ENCODE measurements at regions of chrX and their contacts with region 1.

Region 1: GRCh38 chrX:106611679-106612392 is at the start of gene RADX:
- DNase-seq: peak; percentile 10 to 88 (median 78)
- H3K4me3 ChIP-seq: peak within 1 kb of the TSS; percentile 29 to 75 (median 59)
- H3K27ac ChIP-seq: peak within 1 kb of the TSS in 31 of 59 donors; percentile 7 to 72 (median 41)
- H3K27me3 ChIP-seq: peaks cover 0 to 62% (median 9%) of the 10 kb centered on the region in 45 donors
- CTCF ChIP-seq: no peak
- total RNA-seq, gene RADX: 1.7 to 16.3 (median 7.7) TPM

Region 2: DNA sequence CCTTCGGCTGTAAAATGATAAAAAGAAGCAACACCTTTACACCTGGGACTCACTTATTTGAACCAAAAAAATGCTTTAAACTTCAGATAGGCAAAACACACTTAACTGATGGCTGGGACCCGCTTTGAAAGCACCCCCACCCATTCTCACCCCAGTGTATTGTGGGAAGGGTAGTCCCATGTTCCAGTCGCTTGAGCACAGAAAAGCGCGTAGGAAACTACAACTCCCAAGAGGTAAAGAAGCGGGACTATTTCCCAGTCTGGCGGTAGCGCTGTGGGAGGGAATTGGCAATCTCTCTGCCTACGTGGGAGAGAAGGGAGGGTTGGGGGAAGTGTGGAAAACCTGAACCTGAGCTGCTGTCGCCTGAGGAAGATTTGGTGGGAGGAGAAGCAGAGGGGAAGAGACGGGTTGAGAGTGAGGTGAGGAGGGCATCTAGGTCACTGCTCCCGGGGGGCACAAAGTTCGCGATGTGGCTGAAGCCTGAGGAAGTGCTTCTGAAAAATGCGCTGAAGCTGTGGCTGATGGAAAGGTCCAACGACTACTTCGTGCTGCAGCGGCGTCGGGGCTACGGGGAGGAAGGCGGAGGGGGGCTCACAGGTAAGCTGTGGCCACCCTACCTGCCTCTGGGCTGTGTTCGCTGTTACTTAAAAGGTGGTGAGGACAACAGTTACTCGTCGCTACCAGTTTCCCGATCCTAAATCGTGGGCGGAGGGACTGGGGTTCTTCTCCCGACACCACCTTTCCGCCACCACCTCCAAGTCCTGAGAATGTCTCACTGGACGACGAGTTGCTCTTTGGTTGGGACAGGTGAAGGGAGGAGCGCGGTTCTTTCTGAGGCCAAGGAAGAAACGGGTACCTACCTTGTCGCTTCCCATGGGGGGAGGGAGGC is 190.8 kb after region 1 on chrX and contains the start of gene TBC1D8B:
- intact Hi-C with region 1: loop called in 1 of 2 experiments (anchors 10 kb)
- DNase-seq: peak; percentile 15 to 81 (median 74)
- H3K4me3 ChIP-seq: peak within 1 kb of the TSS; percentile 37 to 77 (median 62)
- H3K27ac ChIP-seq: peak within 1 kb of the TSS in 3 of 59 donors; percentile 16 to 51 (median 46)
- H3K27me3 ChIP-seq: peaks cover 0 to 81% (median 34%) of the 10 kb centered on the region in 45 donors
- CTCF ChIP-seq: peak in 3 of 56 donors; percentile 12 to 24 (median 16)
- total RNA-seq, gene TBC1D8B: 2.0 to 14.5 (median 5.5) TPM